Natural killer cell (primary cell): ENCODE measurements at regions of chr11 and their contacts with region 1.

Region 1: DNA sequence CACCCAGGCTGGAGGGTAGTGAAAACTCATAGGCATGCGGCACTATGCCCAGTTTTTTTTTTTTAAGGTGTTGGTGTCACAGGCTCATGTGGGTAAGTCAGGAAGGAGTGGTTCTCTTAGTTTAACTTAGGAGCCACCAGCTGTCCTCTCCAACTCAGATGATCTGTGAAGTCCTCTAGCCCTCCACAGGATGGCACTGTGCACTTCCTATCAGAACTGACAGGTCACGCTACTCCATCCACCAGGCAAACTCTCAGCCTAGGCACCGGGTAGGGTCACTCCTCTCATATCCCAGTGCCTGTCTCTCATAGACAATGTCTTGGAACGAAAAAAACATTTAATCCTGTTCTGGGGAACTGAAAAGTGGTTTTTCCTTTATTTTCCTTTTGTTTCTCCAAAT is 16.5 kb downstream of the NAP1L4 start:
- DNase-seq: peak; percentile 33 to 78
- ATAC-seq: peak; percentile 83 to 97 (median 93)
- H3K4me3 ChIP-seq: no peak overlapping the region
- H3K4me3 Mint-ChIP-seq: no peak overlapping the region
- H3K27ac ChIP-seq: no peak overlapping the region
- H3K27ac Mint-ChIP-seq: peak overlapping the region in 1 of 2 donors; percentile 27
- H3K4me1 ChIP-seq: no peaks in the 10 kb centered on the region
- H3K4me1 Mint-ChIP-seq: peaks cover 9 to 20% of the 10 kb centered on the region in 2 donors
- H3K27me3 ChIP-seq: no peaks in the 10 kb centered on the region
- H3K27me3 Mint-ChIP-seq: no peaks in the 10 kb centered on the region
- CTCF ChIP-seq: peak; percentile 61

Region 2: GRCh38 chr11:2951231-2952110 is 24.1 kb before region 1 on chr11:
- intact Hi-C with region 1: no loop called
- DNase-seq: no peak
- ATAC-seq: peak in 1 of 3 donors; percentile 56
- H3K4me3 ChIP-seq: no peak overlapping the region
- H3K4me3 Mint-ChIP-seq: peak overlapping the region; percentile 25
- H3K27ac ChIP-seq: peak overlapping the region; percentile 4
- H3K27ac Mint-ChIP-seq: peak overlapping the region; percentile 74 to 75
- H3K4me1 ChIP-seq: peaks cover 4% of the 10 kb centered on the region
- H3K4me1 Mint-ChIP-seq: peaks cover 23 to 24% of the 10 kb centered on the region in 2 donors
- H3K27me3 ChIP-seq: no peaks in the 10 kb centered on the region
- H3K27me3 Mint-ChIP-seq: no peaks in the 10 kb centered on the region
- CTCF ChIP-seq: no peak

Region 3: GRCh38 chr11:3021125-3021524 is 45.5 kb after region 1 on chr11:
- intact Hi-C with region 1: loop called (anchors 5 kb)
- DNase-seq: peak in 1 of 2 donors; percentile 75
- ATAC-seq: peak in 2 of 3 donors; percentile 60 to 67
- H3K4me3 ChIP-seq: no peak overlapping the region
- H3K4me3 Mint-ChIP-seq: no peak overlapping the region
- H3K27ac ChIP-seq: no peak overlapping the region
- H3K27ac Mint-ChIP-seq: no peak overlapping the region
- H3K4me1 ChIP-seq: peaks cover 14% of the 10 kb centered on the region
- H3K4me1 Mint-ChIP-seq: peaks cover 8 to 12% of the 10 kb centered on the region in 2 donors
- H3K27me3 ChIP-seq: no peaks in the 10 kb centered on the region
- H3K27me3 Mint-ChIP-seq: no peaks in the 10 kb centered on the region
- CTCF ChIP-seq: peak; percentile 24

Region 4: DNA sequence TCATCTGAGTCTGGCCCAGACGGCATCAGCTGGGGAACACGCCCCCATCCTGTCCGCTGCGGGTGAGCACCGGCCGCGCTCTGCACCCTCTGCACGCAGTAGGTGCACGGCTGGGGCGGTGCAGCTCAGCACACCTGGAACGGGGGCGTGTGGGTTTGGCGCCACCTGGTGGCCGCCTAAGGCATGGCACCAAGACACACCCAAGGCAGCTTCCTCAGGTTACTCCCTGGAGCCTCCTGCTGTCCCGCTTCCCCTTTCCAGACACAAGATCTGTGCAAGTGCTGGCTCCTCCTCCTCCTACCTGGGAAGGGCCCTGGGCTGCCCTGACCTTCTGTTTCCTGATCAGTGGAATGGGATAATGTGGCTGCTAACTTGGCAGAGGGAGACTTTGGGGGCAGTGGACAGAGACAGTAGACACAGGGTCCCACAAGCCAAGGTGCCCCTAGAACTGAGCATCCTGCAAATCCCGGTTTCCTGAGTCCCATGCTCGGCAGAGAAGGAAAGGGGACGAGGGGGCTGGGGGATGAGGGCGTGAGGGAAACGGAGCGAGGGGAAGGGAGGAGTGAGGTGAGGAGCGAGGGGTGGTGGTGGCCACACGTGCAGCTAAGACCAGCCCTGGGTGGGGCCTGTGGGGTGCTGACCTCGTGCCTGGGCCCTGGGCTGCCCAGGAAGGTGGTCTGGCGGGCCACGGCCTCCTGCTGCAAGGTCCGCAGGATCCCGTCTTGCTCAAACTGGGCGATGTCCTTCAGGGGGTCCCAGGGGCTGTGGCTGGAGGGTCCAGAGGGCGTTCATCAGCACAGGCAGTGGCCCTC is 116.4 kb after region 1 on chr11:
- intact Hi-C with region 1: loop called (anchors 2 kb)
- DNase-seq: peak; percentile 66 to 86
- ATAC-seq: peak; percentile 80 to 89 (median 80)
- H3K4me3 ChIP-seq: no peak overlapping the region
- H3K4me3 Mint-ChIP-seq: no peak overlapping the region
- H3K27ac ChIP-seq: no peak overlapping the region
- H3K27ac Mint-ChIP-seq: peak overlapping the region in 1 of 2 donors; percentile 22
- H3K4me1 ChIP-seq: peaks cover 10% of the 10 kb centered on the region
- H3K4me1 Mint-ChIP-seq: peaks cover 0 to 23% of the 10 kb centered on the region in 2 donors
- H3K27me3 ChIP-seq: no peaks in the 10 kb centered on the region
- H3K27me3 Mint-ChIP-seq: no peaks in the 10 kb centered on the region
- CTCF ChIP-seq: peak; percentile 98

Region 5: GRCh38 chr11:3217676-3218482 is 242.3 kb after region 1 on chr11:
- intact Hi-C with region 1: loop called (anchors 1 kb)
- DNase-seq: no peak
- ATAC-seq: no peak
- H3K4me3 ChIP-seq: no peak overlapping the region
- H3K4me3 Mint-ChIP-seq: no peak overlapping the region
- H3K27ac ChIP-seq: no peak overlapping the region
- H3K27ac Mint-ChIP-seq: no peak overlapping the region
- H3K4me1 ChIP-seq: peaks cover 15% of the 10 kb centered on the region
- H3K4me1 Mint-ChIP-seq: peaks cover 7 to 23% of the 10 kb centered on the region in 2 donors
- H3K27me3 ChIP-seq: peaks cover 2% of the 10 kb centered on the region
- H3K27me3 Mint-ChIP-seq: peaks cover 13 to 27% of the 10 kb centered on the region in 2 donors
- CTCF ChIP-seq: no peak